SK-N-SH (cell line): ENCODE measurements at regions of chr10 and their contacts with region 1.

Region 1: DNA sequence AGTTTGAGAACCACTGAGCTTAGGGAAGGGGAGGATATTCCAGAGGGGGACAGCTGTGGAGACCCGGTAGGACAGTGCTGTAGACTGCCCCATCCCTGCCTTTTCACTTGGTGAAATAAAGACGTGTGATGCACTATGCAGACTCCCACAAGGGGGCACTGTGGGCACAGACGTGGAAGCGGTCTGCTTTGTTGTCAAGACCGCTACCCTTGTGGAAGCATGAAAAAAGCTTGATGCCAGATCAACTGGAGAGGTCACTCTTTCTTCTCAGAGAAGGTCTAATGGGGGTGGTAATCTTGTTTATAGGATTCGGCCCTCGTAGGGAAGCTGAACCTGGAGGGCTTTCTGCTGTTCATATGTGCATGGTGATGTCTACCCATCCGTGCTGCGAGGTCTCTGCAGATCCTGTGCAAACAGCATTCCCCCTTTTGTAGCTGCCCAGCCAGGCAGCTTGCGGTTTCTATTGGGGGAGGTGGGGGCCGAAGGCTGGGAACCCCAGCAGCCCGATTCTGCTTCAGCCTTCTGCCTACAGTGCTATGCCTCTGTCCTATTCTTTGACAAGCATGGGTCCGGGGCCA is 13.7 kb downstream of the RPS24 start:
- DNase-seq: peak; percentile 80
- H3K4me3 ChIP-seq: no peak overlapping the region; a peak in 1 of 4 replicates
- H3K27ac ChIP-seq: peak overlapping the region in 1 of 2 experiments; percentile 70; a peak in 2 of 4 replicates
- H3K4me1 ChIP-seq: peaks cover 22 to 26% of the 10 kb centered on the region in 2 experiments; a peak in 3 of 4 replicates
- H3K27me3 ChIP-seq: no peaks in the 10 kb centered on the region
- CTCF ChIP-seq: peak; percentile 94
- EP300 ChIP-seq: peak in 1 of 2 experiments; percentile 57; a peak in 1 of 4 replicates
- RAD21 ChIP-seq: peak; percentile 100

Region 2: DNA sequence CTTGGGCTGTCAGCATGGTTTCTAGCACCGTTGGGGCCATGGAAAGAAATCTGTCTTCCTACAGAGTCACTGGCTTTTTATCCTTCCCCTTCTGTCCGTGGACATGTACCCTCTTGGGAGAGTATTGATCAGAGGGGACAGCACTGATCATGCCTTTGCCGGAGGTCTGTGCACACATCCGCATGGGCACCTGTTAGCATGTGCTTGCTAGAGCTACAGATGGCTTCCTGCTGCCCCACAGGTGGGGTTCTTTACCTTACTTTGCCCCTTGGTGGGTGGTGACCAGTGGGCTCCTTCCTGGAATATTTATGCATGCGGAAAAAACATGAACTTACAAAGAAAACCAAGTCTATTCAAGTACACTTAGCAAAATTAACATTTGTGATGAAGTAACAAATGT is 11.2 kb after region 1 on chr10:
- CTCF ChIA-PET with region 1: interaction called, 26 read pairs
- POLR2A ChIA-PET with region 1: no interaction called
- DNase-seq: no peak
- H3K4me3 ChIP-seq: no peak overlapping the region
- H3K27ac ChIP-seq: no peak overlapping the region
- H3K4me1 ChIP-seq: peaks cover 0 to 2% of the 10 kb centered on the region in 2 experiments; a peak in 1 of 4 replicates
- H3K27me3 ChIP-seq: no peaks in the 10 kb centered on the region
- CTCF ChIP-seq: no peak
- EP300 ChIP-seq: no peak
- RAD21 ChIP-seq: no peak

Region 3: GRCh38 chr10:78139341-78139740 is 91.9 kb after region 1 on chr10:
- CTCF ChIA-PET with region 1: interaction called, 14 read pairs
- POLR2A ChIA-PET with region 1: no interaction called
- DNase-seq: peak; percentile 65
- H3K4me3 ChIP-seq: no peak overlapping the region
- H3K27ac ChIP-seq: peak overlapping the region in 1 of 2 experiments; percentile 31; a peak in 1 of 4 replicates
- H3K4me1 ChIP-seq: peaks cover 4 to 13% of the 10 kb centered on the region in 2 experiments; a peak in 1 of 4 replicates
- H3K27me3 ChIP-seq: 0 out of 2 replicates have a peak, but pooled peaks cover 8% of the 10 kb centered on the region
- CTCF ChIP-seq: no peak
- EP300 ChIP-seq: 0 out of 4 replicates have a peak, but pooled peaks of 1 of the 2 experiments have one; percentile 8
- RAD21 ChIP-seq: no peak

Region 4: GRCh38 chr10:78194539-78195402 is 147.4 kb after region 1 on chr10:
- CTCF ChIA-PET with region 1: interaction called, 20 read pairs
- POLR2A ChIA-PET with region 1: no interaction called
- DNase-seq: peak; percentile 84
- H3K4me3 ChIP-seq: no peak overlapping the region
- H3K27ac ChIP-seq: peak overlapping the region in 1 of 2 experiments; percentile 89; a peak in 2 of 4 replicates
- H3K4me1 ChIP-seq: peaks cover 11 to 25% of the 10 kb centered on the region in 2 experiments; a peak in 3 of 4 replicates
- H3K27me3 ChIP-seq: no peaks in the 10 kb centered on the region
- CTCF ChIP-seq: no peak
- EP300 ChIP-seq: peak in 1 of 2 experiments; percentile 70; a peak in 2 of 4 replicates
- RAD21 ChIP-seq: no peak; the same call in 1 of the 2 replicates

Region 5: DNA sequence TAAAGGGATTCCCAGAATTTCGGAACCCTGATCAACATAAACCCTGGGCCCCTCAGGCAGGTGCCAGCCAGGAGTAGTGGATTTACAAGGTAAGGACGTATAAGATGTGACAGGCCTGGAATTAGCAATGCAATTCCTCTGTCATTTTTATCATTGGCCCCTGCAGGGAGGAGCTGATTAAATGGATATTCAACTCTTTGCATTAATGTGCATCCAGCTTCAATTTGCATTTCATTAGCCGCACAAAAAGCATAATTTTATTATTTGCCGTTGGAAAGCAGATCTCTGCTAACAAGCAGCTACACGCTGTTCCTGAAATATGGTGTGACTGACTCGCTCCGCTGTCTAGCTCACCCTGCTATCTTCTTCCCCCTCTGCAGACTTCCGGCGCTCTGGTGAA is 182.1 kb after region 1 on chr10:
- CTCF ChIA-PET with region 1: interaction called, 13 read pairs
- POLR2A ChIA-PET with region 1: no interaction called
- DNase-seq: no peak
- H3K4me3 ChIP-seq: no peak overlapping the region
- H3K27ac ChIP-seq: no peak overlapping the region
- H3K4me1 ChIP-seq: peaks cover 6 to 18% of the 10 kb centered on the region in 2 experiments; a peak in 3 of 4 replicates
- H3K27me3 ChIP-seq: no peaks in the 10 kb centered on the region
- CTCF ChIP-seq: no peak
- EP300 ChIP-seq: no peak
- RAD21 ChIP-seq: no peak

Region 6: GRCh38 chr10:78327778-78328591 is 280.6 kb after region 1 on chr10:
- CTCF ChIA-PET with region 1: no interaction called
- POLR2A ChIA-PET with region 1: no interaction called
- DNase-seq: no peak
- H3K4me3 ChIP-seq: no peak overlapping the region
- H3K27ac ChIP-seq: no peak overlapping the region
- H3K4me1 ChIP-seq: peaks cover 12% of the 10 kb centered on the region in 2 experiments; a peak in 3 of 4 replicates
- H3K27me3 ChIP-seq: no peaks in the 10 kb centered on the region
- CTCF ChIP-seq: no peak
- EP300 ChIP-seq: no peak
- RAD21 ChIP-seq: no peak

Region 7: DNA sequence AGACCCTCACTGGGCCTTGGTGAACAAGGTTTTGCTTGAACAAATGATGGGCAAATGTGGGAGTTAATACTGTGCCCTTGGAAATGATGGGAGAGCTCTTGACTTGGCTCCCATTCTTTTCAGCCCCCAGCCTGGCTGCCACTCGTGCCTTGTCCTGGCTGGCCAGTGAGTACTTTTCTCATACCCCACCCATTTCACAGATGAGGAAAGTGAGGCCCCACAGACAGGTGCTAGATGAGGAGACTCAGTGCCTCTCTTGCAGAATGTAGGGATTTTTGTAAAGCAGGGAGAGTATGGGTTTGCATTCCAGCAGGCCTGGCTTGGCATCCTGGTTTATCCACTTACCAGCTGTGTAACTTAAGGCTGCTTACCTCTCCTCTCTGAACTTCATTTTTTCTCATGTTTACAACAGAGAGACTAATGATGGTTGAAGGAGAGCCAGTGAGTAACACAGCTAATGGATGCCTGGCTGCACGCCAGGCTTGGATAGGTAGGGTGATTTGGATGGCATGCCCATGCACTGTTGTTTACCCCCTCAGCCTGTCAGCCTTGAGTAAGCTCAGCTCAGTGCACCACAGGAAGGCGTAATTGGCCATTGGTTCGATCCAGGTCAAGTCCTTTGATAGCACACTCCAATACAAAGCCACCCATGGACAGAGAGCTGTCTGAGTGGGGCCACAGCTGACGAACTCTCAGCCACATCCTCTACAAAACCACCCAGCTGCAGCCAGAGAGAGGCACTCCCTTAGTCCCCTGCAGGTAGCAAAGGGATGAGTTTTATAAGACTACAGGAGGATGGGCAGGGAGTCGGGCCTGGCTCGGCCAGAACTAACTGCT is 423.1 kb after region 1 on chr10:
- CTCF ChIA-PET with region 1: interaction called, 15 read pairs
- POLR2A ChIA-PET with region 1: no interaction called
- DNase-seq: peak; percentile 62
- H3K4me3 ChIP-seq: no peak overlapping the region
- H3K27ac ChIP-seq: peak overlapping the region in 1 of 2 experiments; percentile 100; a peak in 2 of 4 replicates
- H3K4me1 ChIP-seq: peaks cover 0 to 54% of the 10 kb centered on the region in 2 experiments; a peak in 2 of 4 replicates
- H3K27me3 ChIP-seq: no peaks in the 10 kb centered on the region
- CTCF ChIP-seq: no peak
- EP300 ChIP-seq: peak; percentile 33 to 52; a peak in 2 of 4 replicates
- RAD21 ChIP-seq: 0 out of 2 replicates have a peak, but pooled peaks have one; percentile 7